ENCODE measurements at regions of chr17 and their contacts with region 1.

Region 1: GRCh38 chr17:43760254-43760852 is 1.8 kb upstream of the SOST start:
- DNase-seq: peak; percentile 98
- ATAC-seq: peak; percentile 92
- H3K4me3 ChIP-seq: no peak overlapping the region
- H3K27ac ChIP-seq: no peak overlapping the region
- H3K4me1 ChIP-seq: peaks cover 11% of the 10 kb centered on the region; the same call in 1 of the 2 replicates
- H3K27me3 ChIP-seq: no peaks in the 10 kb centered on the region
- CTCF ChIP-seq: peak; percentile 100

Region 2: DNA sequence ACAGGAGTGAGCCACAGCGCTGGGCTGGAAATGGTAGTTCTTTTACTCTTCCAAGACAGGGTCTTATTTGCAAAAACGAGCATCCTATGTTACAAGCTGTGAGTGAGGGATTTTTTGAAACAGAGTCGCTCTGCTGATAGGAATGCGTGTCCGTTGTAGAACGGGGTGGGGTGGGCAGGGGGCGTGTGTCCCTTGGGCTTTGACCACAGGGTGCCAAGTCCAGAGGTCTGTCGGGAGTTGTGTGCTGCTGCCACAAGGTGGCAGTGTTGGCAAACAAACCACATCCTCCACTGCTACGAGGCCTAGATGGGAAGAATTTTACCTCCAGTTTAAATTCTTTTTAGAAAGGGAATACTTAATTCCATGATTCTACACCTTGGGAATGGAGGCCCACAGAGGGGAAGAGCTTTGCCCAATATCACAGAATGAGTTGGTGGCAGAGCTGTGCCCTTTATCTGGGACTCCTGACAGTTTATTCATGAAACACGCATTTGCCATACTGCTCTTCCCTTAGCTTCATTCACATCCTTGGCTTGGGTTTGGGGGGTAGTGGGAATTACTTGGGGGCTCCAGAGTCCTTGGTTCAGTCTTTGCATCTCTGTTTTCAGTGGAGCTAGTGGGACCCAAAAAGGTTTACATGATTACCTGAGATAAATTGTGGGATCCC is 183.7 kb before region 1 on chr17:
- CTCF ChIA-PET with region 1: no interaction called
- POLR2A ChIA-PET with region 1: no interaction called
- intact Hi-C with region 1: loop called (anchors 5 kb)
- DNase-seq: peak; percentile 93
- ATAC-seq: peak; percentile 72
- H3K4me3 ChIP-seq: no peak overlapping the region
- H3K27ac ChIP-seq: no peak overlapping the region
- H3K4me1 ChIP-seq: peaks cover 33% of the 10 kb centered on the region
- H3K27me3 ChIP-seq: no peaks in the 10 kb centered on the region
- CTCF ChIP-seq: peak; percentile 95

Region 3: DNA sequence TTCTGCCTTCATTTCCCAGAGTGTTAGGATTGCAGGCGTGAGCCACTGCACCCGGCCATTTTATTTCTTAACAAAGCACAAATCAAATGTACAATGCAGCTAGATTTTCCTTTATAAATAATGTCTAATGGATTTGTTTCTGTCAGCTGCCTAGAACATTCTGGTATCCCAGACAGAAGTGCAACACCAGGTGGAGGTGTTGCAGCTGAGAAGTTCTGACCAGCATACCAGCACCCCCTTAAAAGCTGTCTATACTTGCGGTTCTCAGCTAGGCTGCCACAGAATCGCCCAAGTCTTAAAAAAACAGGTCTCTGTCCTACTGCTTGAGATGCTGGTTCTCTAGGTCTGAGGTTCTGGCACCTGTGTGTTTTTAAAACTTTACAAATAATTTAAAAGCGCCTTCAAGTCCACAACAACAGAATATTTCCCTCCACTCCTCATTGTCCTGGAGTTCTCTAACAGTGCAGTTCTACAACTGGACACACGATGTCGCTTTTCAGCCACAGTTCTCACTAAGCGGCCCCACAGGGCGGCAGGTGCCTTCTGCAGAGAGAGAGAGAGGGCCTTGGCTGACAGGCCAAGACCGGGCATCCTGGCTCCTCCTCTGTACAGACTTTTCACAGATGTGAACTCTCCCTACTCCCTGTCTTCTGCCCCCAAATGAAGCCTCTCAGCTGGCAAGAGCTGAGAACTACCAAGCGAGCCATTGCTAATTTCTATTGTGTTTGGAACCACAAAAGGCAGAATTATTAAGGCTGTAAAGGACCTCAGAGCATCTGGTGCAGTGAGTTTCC is 66.1 kb before region 1 on chr17:
- CTCF ChIA-PET with region 1: interaction called, 36 read pairs
- POLR2A ChIA-PET with region 1: interaction called, 3 read pairs
- intact Hi-C with region 1: loop called (anchors 1 kb)
- DNase-seq: peak; percentile 97
- ATAC-seq: peak; percentile 94
- H3K4me3 ChIP-seq: peak overlapping the region; percentile 24; the same call in 1 of the 2 replicates
- H3K27ac ChIP-seq: no peak overlapping the region
- H3K4me1 ChIP-seq: no peaks in the 10 kb centered on the region
- H3K27me3 ChIP-seq: no peaks in the 10 kb centered on the region
- CTCF ChIP-seq: peak; percentile 99

Region 4: DNA sequence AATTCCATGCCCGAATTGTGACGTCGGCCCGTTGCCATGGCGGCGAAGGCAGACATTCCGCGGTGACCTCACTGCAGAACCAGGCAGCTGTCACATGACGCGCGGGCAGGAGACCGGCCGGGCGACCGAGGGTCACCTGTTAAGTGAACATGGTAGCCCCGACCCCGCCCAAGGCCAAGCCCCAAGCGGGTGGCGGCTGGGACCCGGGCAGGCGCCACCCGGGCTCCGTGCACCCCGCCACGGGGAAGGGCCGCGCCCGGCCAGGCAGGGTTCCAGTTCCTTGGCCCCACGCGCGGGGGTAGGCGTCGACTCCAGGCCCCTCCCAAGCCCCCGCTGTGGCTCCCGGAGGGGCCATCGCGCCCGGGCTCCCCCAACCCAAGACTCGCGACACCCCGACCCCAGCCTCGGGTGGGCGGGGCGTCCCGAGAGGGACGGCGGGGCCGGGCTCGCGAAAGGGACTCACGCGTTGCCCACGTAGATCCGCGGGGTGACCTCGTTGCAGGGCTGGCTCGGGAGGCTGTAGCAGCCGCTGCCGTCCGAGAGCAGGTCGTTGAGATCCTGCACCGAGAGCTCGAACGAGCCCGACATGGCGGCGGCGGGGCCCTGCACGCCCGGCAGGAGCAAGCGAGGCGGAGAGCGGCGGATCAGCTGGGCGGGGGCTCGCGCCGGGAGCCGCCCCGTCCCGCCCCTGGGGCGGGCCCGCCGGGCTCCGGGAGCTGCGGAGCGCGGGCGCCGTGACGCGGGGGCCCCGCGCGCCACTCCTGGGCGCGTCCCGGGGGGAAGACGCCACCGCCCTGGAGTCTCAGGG is 18.2 kb after region 1 on chr17 and contains the start of gene DUSP3:
- CTCF ChIA-PET with region 1: no interaction called
- POLR2A ChIA-PET with region 1: interaction called, 14 read pairs
- intact Hi-C with region 1: no loop called
- DNase-seq: peak; percentile 89
- ATAC-seq: peak; percentile 95
- H3K4me3 ChIP-seq: peak within 1 kb of the TSS; percentile 94
- H3K27ac ChIP-seq: peak within 1 kb of the TSS; percentile 74
- H3K4me1 ChIP-seq: peaks cover 19% of the 10 kb centered on the region
- H3K27me3 ChIP-seq: no peaks in the 10 kb centered on the region
- CTCF ChIP-seq: no peak
- total RNA-seq, gene DUSP3: 48.6 and 50.7 TPM in 2 replicates

Measured in PC-3 (cell line).